ENCODE measurements at regions of chr4 and their contacts with region 1.

Region 1: DNA sequence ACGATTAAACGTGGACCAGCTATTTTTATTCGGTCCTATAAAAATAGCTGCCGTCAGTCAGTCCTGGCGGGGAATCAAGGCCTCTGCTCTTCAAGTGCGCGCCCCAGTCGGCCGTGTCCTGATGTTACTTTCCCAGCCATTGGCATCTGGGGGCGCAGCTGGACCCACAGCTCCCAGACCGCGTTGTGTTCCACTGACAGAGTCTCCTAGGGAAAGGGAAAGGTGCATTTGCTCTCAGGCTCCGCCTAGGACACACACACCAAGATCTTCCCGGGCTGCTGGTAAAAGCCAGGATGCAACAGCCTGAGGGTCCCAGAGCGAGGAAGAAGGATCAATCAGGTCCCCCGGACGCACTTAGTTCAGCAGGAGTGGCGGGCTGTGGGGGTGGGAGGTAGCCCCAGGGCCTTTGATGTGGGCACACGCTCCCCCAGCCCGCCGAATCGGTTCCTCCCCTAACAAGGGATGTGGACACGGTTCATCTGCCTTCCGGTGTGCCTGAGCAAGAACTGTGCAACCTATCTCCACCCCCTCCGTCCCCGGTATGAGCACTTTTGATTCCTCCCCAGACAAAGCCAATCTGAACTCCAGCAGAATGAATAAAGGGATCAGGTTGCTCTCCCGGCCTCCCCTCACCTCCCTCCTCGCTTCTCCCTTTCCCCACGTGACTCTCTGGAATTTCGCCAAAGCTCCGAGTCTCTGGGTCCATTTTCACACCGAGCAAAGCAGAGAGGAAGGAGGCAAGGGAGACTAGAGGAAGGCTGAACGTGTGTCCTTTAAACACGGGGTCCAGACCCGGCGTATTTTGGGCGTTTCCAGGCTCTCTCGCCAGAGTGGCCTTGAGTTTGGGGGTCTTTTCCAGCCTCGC is 626 bp upstream of the FRAS1 start:
- DNase-seq: peak; percentile 85
- H3K4me3 ChIP-seq: peak overlapping the region; percentile 83
- H3K27ac ChIP-seq: no peak overlapping the region
- H3K4me1 ChIP-seq: no peaks in the 10 kb centered on the region
- H3K27me3 ChIP-seq: no peaks in the 10 kb centered on the region

Region 2: DNA sequence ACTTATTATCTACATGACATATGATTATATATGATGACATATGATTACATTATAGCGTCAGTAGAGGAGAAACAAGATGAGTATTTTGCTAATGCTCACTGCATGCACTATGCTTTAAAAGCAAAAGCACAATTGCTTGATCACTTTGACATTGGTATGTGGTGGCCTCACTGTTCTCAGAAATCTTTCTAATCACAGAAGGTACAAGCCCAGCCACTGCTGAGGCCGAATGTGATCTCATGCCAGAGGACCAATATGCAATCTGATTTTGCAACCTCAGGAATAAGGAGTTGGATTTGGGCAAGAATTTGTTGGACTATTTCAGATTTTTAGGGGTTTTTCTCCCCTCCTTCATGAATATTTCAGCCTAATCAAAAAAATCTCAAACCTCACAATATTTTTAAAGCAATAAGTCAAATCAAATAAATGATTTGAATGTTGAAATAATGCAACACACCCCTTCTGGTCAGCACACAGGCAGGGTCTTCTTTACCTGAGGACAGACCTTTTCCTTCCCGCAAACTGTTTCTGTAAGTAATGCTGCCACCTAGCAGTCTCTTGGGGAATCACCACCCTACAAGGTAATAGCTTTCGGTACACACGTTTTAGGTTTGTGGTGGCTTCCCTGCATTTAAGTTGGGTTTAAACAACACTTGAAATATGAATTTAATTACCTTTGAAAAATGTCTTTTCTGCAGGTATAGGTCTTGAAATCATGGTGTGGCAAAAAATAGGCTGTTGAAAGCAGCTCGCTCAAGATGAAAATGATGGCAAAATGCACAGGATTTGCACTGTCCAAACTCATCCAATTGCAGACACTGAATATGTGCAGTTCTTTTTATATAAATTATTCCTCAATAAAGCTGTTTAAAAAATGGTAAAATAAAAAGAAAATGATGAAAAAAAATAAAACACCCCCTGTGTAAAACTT is 455.7 kb before region 1 on chr4:
- in situ Hi-C with region 1: no loop called
- DNase-seq: peak; percentile 58
- H3K4me3 ChIP-seq: no peak overlapping the region
- H3K27ac ChIP-seq: no peak overlapping the region
- H3K4me1 ChIP-seq: no peaks in the 10 kb centered on the region
- H3K27me3 ChIP-seq: peaks cover 93% of the 10 kb centered on the region

Region 3: DNA sequence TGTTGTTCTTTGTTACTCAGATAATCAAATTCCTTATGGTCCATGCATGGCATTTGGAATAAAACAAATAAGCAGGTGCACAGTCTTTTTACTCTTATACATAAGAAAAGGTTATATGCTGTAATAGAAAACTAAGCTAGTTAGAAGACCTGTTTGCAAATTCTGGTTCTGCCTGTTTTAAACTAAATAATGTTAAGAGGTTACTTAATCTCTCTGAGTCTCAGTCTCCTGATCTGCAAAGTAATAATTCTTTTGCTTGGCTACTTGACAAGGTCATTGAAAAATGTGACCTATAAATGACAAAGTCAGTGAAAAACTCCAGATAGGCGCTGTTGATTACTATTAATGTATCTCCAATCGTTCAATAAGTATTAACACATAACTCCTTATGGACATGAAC is 452.6 kb after region 1 on chr4:
- in situ Hi-C with region 1: loop called (anchors 5 kb)
- DNase-seq: no peak
- H3K4me3 ChIP-seq: no peak overlapping the region
- H3K27ac ChIP-seq: no peak overlapping the region
- H3K4me1 ChIP-seq: peaks cover 12% of the 10 kb centered on the region
- H3K27me3 ChIP-seq: no peaks in the 10 kb centered on the region

Measured in GM23248 (cell line).